Common myeloid progenitor, CD34-positive (primary cell): ENCODE measurements at regions of chr9 and their contacts with region 1.

Region 1: GRCh38 chr9:33404788-33405362 is 2.5 kb upstream of the AQP7 start:
- DNase-seq: no peak
- H3K4me3 ChIP-seq: no peak overlapping the region
- H3K27ac ChIP-seq: no peak overlapping the region
- H3K4me1 ChIP-seq: no peaks in the 10 kb centered on the region
- H3K27me3 ChIP-seq: no peaks in the 10 kb centered on the region

Region 2: DNA sequence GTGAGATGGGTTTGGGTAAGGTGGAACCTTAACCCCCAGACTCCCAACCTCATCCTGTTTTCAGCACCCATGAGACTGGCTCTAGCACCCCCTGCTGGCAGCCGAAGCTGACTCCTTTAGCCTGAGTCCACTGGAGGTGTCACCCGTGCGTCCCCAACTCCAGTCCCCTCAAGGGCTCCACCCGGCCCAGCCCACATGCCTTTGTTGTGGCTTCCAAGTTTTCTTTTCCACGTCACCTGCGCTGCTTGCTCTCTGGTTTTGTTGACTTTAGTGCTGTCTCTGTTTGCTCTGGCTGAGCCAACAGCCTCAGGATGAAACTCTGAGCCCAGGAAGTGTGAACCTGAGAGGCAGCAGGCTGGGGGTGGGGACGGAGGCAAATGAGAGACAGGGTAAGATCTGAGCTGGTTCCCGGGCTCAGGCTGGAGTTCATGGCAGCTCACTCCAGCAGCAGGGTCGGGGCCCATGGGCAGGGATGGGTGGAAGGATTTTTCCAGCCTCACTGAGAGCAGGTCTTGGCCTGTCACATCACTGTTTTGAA is 10.7 kb after region 1 on chr9:
- CTCF ChIA-PET with region 1: interaction called, 22 read pairs
- POLR2A ChIA-PET with region 1: no interaction called
- DNase-seq: peak; percentile 53 to 74 (median 64)
- H3K4me3 ChIP-seq: no peak overlapping the region
- H3K27ac ChIP-seq: no peak overlapping the region
- H3K4me1 ChIP-seq: peaks cover 0 to 10% (median 3%) of the 10 kb centered on the region in 4 experiments
- H3K27me3 ChIP-seq: no peaks in the 10 kb centered on the region

Region 3: GRCh38 chr9:33442125-33442524 is 37.2 kb after region 1 on chr9:
- CTCF ChIA-PET with region 1: no interaction called
- POLR2A ChIA-PET with region 1: no interaction called
- DNase-seq: no peak
- H3K4me3 ChIP-seq: no peak overlapping the region
- H3K27ac ChIP-seq: no peak overlapping the region
- H3K4me1 ChIP-seq: peaks cover 3 to 34% (median 19%) of the 10 kb centered on the region in 4 experiments
- H3K27me3 ChIP-seq: no peaks in the 10 kb centered on the region